ENCODE measurements at regions of chr15 and their contacts with region 1.

Region 1: DNA sequence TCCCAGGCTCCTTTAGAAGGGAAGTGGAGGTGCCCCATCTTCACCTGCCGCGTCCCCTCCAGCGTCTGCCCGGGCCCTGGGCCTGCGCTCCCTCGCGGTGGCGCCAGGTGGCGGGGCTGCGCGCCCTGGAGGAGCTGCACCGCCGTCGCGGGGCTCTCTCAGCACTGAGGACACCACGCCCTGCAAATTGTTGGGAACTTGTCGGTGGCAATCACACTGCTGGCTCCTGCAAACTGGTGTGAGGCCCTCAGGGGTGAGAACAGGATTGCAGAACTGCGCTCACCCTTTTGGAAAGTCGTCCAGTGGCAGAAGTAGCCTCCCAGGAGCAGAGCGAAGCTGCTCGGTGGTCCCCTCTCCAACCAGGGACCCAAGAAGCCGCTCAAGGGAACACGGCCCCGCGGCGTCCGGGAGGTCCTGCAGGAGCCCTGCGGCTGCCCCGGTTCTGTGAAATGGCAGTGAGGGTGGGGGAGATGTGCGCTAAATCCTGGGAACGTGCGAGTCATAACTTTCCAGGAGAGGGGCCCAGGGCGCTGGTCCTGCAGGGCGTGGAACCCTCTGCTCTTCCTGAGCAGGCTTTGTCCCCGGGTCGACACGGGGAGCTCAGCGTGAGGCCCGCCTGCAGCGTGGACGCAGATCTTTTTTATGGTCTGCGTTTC is 995 bp upstream of the LRRK1 start:
- DNase-seq: peak; percentile 89
- ATAC-seq: peak; percentile 95

Region 2: DNA sequence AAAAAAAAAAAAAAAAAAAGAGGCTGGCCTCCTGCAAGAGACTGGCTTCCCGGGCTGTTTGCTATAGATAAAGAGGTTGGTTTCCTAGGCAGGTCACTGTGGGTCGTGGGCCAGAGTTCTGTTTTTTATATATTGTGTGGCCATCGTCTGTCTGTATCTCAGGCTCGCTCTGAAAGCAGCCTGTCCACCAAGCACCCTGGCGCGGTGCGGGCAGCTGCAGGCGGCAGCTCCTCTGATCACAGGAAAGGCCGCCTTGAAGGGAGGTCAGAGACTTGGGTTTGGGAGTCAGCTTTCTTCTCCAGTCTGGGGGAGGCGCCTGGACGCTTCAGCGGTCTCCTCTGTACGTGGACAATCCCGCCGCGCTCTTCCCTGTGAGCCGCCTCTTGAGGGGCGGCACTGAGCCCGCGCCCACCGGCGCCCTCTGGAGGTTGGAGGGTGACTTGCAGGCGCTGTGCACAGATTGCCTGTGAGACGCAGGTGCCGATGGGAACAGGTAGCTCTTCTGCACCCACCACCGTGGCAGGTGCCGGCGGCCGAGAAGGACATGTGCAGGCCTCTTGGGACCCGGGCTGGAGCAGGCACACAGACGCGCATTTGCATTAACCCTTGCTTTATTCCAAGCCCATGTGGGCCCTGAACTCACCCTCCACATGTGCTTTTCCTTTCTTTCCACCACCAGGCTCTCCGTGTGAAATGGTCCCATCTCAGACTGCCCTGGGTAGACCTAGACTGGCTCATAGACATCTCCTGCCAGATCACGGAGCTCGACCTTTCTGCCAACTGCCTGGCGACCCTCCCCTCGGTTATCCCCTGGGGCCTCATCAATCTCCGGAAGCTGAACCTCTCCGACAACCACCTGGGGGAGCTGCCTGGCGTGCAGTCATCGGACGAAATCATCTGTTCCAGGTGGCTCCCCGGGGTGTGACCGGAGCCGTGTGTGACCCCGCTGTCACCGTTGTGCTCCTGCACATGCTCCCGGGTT is 90.3 kb after region 1 on chr15:
- intact Hi-C with region 1: loop called (anchors 5 kb)
- DNase-seq: peak; percentile 89
- ATAC-seq: peak; percentile 88

Region 3: GRCh38 chr15:101152914-101153313 is 234.8 kb after region 1 on chr15:
- intact Hi-C with region 1: no loop called
- DNase-seq: no peak
- ATAC-seq: no peak

Region 4: DNA sequence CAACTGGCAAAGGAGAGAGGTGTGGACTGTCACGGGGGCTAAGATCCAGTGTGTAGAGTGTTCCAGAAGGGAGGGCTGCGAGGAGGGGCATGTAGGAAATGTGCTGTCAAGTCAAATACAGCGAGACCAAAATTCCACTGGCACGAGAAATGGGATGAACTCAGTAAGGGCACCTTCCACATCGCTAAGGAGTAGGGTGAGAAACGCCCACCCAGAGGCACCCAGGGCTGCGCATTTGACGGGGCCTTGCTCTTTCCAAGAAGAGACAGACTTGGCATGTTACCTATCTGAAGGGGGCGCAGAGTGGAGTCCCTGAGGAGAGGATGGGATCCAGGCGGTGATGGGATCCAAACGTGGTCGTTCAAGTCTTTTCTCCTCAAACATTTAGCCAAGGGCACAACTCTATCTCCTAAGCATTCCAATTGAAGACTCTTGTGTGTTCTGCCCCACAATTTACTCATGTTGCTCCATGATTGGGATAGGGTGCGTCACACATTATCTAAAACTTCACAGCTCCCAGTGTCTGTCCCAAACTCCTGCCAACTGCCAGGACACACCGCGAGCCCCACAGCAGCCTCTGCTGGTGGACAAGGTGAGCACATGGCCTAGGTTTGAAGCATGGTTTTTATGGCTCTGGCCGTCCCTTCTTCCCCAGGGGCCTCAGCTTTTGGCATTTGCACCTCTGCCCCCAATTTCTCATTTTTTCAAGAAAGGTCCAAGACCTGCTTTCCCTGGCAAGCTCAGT is 351.5 kb after region 1 on chr15:
- intact Hi-C with region 1: loop called (anchors 10 kb)
- DNase-seq: peak; percentile 62
- ATAC-seq: peak; percentile 66

Measured in Right ventricle myocardium superior (tissue), 1 donor.